Panc1 (cell line): ENCODE measurements at regions of chr9 and their contacts with region 1.

Region 1: GRCh38 chr9:125143375-125144090 is at the start of gene SCAI:
- DNase-seq: peak; percentile 87
- ATAC-seq: peak; percentile 100
- H3K4me3 ChIP-seq: peak within 1 kb of the TSS; percentile 39 to 59
- H3K27ac ChIP-seq: peak within 1 kb of the TSS; percentile 34; the same call in 1 of the 2 replicates
- H3K4me1 ChIP-seq: no peaks in the 10 kb centered on the region; the same call in 1 of the 2 replicates
- H3K27me3 ChIP-seq: no peaks in the 10 kb centered on the region
- CTCF ChIP-seq: peak; percentile 92
- total RNA-seq, gene SCAI: 4.7 TPM

Region 2: GRCh38 chr9:124940693-124941453 is 202.7 kb before region 1 on chr9 and contains the start of gene GOLGA1:
- CTCF ChIA-PET with region 1: no interaction called
- POLR2A ChIA-PET with region 1: interaction called, 14 read pairs
- in situ Hi-C with region 1: no loop called
- intact Hi-C with region 1: loop called (anchors 10 kb)
- DNase-seq: peak; percentile 42
- ATAC-seq: peak; percentile 98
- H3K4me3 ChIP-seq: peak within 1 kb of the TSS; percentile 81 to 90
- H3K27ac ChIP-seq: peak within 1 kb of the TSS; percentile 90
- H3K4me1 ChIP-seq: peaks cover 6% of the 10 kb centered on the region
- H3K27me3 ChIP-seq: no peaks in the 10 kb centered on the region
- CTCF ChIP-seq: no peak
- total RNA-seq, gene GOLGA1: 15.5 TPM

Region 3: DNA sequence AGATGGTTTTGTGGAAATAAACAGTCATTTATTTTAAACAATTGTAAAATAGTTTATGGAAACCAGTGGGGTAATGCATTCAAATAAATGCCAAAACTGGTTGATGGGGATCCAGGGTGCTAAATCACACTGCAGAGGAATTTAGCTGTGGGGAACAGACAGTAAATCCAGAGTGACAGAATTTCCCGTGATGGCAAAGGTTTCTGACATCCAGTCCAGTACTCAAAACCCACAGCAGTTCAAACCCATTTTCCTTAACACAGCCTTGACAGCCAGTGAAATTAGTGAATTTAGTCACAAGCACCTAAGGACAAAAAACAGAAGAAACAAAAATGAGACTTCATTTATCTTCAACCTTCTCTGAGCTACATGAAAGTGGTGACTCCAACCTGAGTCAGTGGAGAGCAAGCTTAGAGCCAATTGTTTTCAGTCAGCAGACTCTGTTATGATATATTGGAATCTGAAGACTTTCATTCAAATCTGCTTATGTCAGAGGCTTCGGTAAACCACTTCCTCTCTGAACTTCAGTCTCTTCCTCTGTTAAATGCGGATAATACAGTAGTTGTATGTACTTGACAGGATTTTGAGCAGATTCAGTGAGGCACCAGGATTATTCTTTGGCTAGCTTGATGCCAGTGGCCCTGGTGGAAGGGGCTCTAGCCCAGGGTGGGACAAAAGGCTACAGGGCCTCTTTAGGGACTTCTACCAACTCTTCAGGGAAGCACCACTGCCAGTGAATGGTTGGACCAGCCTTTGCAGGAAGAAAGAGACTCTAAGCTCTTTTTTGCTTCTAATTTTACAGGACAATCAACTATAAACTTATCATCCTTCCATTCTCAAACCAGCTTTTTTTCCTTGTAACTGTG is 378.2 kb after region 1 on chr9:
- CTCF ChIA-PET with region 1: no interaction called
- POLR2A ChIA-PET with region 1: no interaction called
- in situ Hi-C with region 1: no loop called
- intact Hi-C with region 1: no loop called
- DNase-seq: peak; percentile 75
- ATAC-seq: peak; percentile 79
- H3K4me3 ChIP-seq: no peak overlapping the region
- H3K27ac ChIP-seq: no peak overlapping the region
- H3K4me1 ChIP-seq: no peaks in the 10 kb centered on the region
- H3K27me3 ChIP-seq: no peaks in the 10 kb centered on the region
- CTCF ChIP-seq: no peak